ENCODE measurements at regions of chr12 and their contacts with region 1.

Region 1: GRCh38 chr12:120649442-120650232 is 9.2 kb downstream of the CABP1 start:
- DNase-seq: no peak
- ATAC-seq: peak in 1 of 2 experiments; percentile 6; a peak in 3 of 6 replicates
- H3K4me3 ChIP-seq: peak overlapping the region; percentile 29; the same call in 1 of the 3 replicates
- H3K27ac ChIP-seq: peak overlapping the region in 1 of 2 experiments; percentile 87; a peak in 4 of 6 replicates
- H3K4me1 ChIP-seq: peaks cover 16% of the 10 kb centered on the region; the same call in 2 of the 3 replicates
- CTCF ChIP-seq: no peak; the same call in 1 of the 3 replicates
- EP300 ChIP-seq: no peak
- POLR2A ChIP-seq: no peak
- RAD21 ChIP-seq: no peak

Region 2: GRCh38 chr12:120588948-120589930 is 60.4 kb before region 1 on chr12:
- CTCF ChIA-PET with region 1: interaction called, 155 read pairs
- POLR2A ChIA-PET with region 1: no interaction called
- DNase-seq: no peak
- ATAC-seq: no peak
- H3K4me3 ChIP-seq: no peak overlapping the region
- H3K27ac ChIP-seq: no peak overlapping the region; a peak in 1 of 6 replicates
- H3K4me1 ChIP-seq: peaks cover under 1% of the 10 kb centered on the region; the same call in 1 of the 3 replicates
- CTCF ChIP-seq: no peak
- EP300 ChIP-seq: no peak
- POLR2A ChIP-seq: no peak
- RAD21 ChIP-seq: no peak

Region 3: GRCh38 chr12:120662879-120663278 is 13.2 kb after region 1 on chr12:
- CTCF ChIA-PET with region 1: interaction called, 95 read pairs
- POLR2A ChIA-PET with region 1: no interaction called
- DNase-seq: no peak
- ATAC-seq: no peak
- H3K4me3 ChIP-seq: no peak overlapping the region
- H3K27ac ChIP-seq: no peak overlapping the region
- H3K4me1 ChIP-seq: no peaks in the 10 kb centered on the region
- CTCF ChIP-seq: no peak
- EP300 ChIP-seq: no peak
- POLR2A ChIP-seq: no peak
- RAD21 ChIP-seq: no peak

Region 4: GRCh38 chr12:120677765-120678473 is 28.3 kb after region 1 on chr12:
- CTCF ChIA-PET with region 1: interaction called, 127 read pairs
- POLR2A ChIA-PET with region 1: no interaction called
- DNase-seq: peak; percentile 37 to 58
- ATAC-seq: peak; percentile 39 to 67; a peak in 3 of 6 replicates
- H3K4me3 ChIP-seq: no peak overlapping the region
- H3K27ac ChIP-seq: peak overlapping the region; percentile 12 to 62; a peak in 3 of 6 replicates
- H3K4me1 ChIP-seq: peaks cover 11% of the 10 kb centered on the region
- CTCF ChIP-seq: no peak
- EP300 ChIP-seq: no peak
- POLR2A ChIP-seq: no peak
- RAD21 ChIP-seq: no peak

Region 5: GRCh38 chr12:120710031-120710804 is 60.6 kb after region 1 on chr12 and contains the start of gene UNC119B:
- CTCF ChIA-PET with region 1: interaction called, 137 read pairs
- POLR2A ChIA-PET with region 1: no interaction called
- DNase-seq: peak; percentile 52 to 79
- ATAC-seq: peak; percentile 87 to 89
- H3K4me3 ChIP-seq: peak within 1 kb of the TSS; percentile 75
- H3K27ac ChIP-seq: peak within 1 kb of the TSS; percentile 85 to 96
- H3K4me1 ChIP-seq: peaks cover 20% of the 10 kb centered on the region
- CTCF ChIP-seq: no peak
- EP300 ChIP-seq: no peak
- POLR2A ChIP-seq: peak; percentile 82
- RAD21 ChIP-seq: no peak
- polyA plus RNA-seq, gene UNC119B: 37.5 and 41.5 TPM in 2 replicates

Region 6: GRCh38 chr12:120971299-120972179 is 321.9 kb after region 1 on chr12:
- CTCF ChIA-PET with region 1: interaction called, 76 read pairs
- POLR2A ChIA-PET with region 1: no interaction called
- DNase-seq: peak; percentile 75 to 78
- ATAC-seq: peak; percentile 90 to 92
- H3K4me3 ChIP-seq: no peak overlapping the region
- H3K27ac ChIP-seq: no peak overlapping the region
- H3K4me1 ChIP-seq: peaks cover 11% of the 10 kb centered on the region
- CTCF ChIP-seq: peak; percentile 85
- EP300 ChIP-seq: no peak
- POLR2A ChIP-seq: no peak
- RAD21 ChIP-seq: peak; percentile 82 to 92

Measured in A549 (cell line).